ENCODE measurements at regions of chr14 and their contacts with region 1.

Region 1: DNA sequence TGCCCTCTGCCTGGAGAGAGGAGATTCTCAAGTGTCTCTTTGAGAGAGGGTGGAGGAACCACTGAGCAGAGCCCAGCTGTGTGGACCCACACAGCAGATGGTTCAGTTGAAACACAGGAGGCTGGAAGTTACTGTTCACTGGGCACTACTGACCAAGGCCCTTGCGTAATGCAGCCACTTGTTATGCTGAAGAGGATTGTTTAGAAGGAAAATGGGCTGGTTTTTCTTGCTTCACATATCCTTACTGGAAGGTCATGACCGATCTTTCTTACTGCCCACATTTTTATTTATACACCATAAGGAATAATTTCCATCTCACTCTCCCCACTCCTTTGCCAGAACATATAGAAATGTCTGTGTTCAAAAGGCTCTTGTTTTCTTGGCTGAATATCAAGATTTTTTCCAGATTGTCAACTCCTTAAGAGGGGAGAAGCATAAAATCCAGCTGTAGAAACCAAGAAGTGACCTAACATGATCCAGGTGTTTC is 375.1 kb upstream of the DDHD1 start:
- DNase-seq: no peak
- H3K4me3 ChIP-seq: no peak overlapping the region
- H3K27ac ChIP-seq: no peak overlapping the region
- H3K4me1 ChIP-seq: peaks cover 0 to 2% of the 10 kb centered on the region in 2 experiments; a peak in 1 of 4 replicates
- H3K27me3 ChIP-seq: no peaks in the 10 kb centered on the region
- CTCF ChIP-seq: no peak
- EP300 ChIP-seq: no peak
- RAD21 ChIP-seq: no peak

Region 2: DNA sequence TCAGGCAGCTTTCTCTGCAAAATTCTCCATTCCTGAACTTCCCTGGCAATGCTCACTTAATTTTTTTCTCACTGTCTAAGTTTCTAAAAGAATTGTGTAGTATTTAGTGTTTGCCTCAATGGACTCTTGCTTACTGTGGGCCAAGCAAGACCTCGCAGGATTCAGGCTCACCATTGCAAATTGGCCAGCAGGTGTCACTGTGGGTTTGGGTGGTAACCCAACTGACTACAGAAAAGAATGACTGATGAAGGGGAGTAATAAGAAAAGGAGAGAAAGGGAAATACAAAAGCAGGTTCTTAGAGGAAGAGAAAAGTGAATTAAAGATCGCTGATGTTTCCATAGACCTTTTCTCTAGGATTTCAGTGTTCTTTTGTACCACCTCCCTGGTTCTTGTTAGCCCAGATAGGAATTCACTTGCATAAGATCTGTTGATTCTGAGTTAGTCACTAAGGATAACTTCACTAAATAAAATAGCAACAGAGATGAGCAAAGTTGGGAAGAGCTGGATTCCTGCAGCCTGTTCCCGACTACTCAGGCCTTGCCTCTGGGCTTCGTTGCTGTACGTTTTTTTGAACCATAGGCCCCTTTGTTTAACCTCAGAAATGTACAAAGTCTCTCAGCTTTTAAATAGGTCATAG is 11.4 kb after region 1 on chr14:
- CTCF ChIA-PET with region 1: interaction called, 50 read pairs
- POLR2A ChIA-PET with region 1: no interaction called
- DNase-seq: peak; percentile 39
- H3K4me3 ChIP-seq: no peak overlapping the region; a peak in 1 of 4 replicates
- H3K27ac ChIP-seq: no peak overlapping the region
- H3K4me1 ChIP-seq: peaks cover 0 to 7% of the 10 kb centered on the region in 2 experiments; a peak in 1 of 4 replicates
- H3K27me3 ChIP-seq: no peaks in the 10 kb centered on the region; the same call in 1 of the 2 replicates
- CTCF ChIP-seq: peak; percentile 86
- EP300 ChIP-seq: no peak
- RAD21 ChIP-seq: peak; percentile 91

Region 3: GRCh38 chr14:53564870-53565269 is 36.6 kb after region 1 on chr14:
- CTCF ChIA-PET with region 1: no interaction called
- POLR2A ChIA-PET with region 1: no interaction called
- DNase-seq: no peak
- H3K4me3 ChIP-seq: no peak overlapping the region
- H3K27ac ChIP-seq: no peak overlapping the region
- H3K4me1 ChIP-seq: no peaks in the 10 kb centered on the region
- H3K27me3 ChIP-seq: no peaks in the 10 kb centered on the region
- CTCF ChIP-seq: no peak
- EP300 ChIP-seq: no peak
- RAD21 ChIP-seq: no peak